ENCODE measurements at regions of chr10 and their contacts with region 1.

Region 1: GRCh38 chr10:99248824-99249223 is 13.2 kb upstream of the HPSE2 start:
- DNase-seq: no peak
- H3K4me3 Mint-ChIP-seq: no peak overlapping the region
- H3K27ac Mint-ChIP-seq: no peak overlapping the region
- H3K4me1 Mint-ChIP-seq: no peaks in the 10 kb centered on the region
- H3K27me3 Mint-ChIP-seq: peaks cover 31% of the 10 kb centered on the region

Region 2: GRCh38 chr10:98467506-98468346 is 781.1 kb before region 1 on chr10:
- CTCF ChIA-PET with region 1: interaction called, 22 read pairs
- intact Hi-C with region 1: loop called (anchors 1 kb)
- DNase-seq: peak; percentile 75
- H3K4me3 Mint-ChIP-seq: peak overlapping the region; percentile 79
- H3K27ac Mint-ChIP-seq: peak overlapping the region; percentile 57
- H3K4me1 Mint-ChIP-seq: peaks cover 6% of the 10 kb centered on the region
- H3K27me3 Mint-ChIP-seq: peaks cover 9% of the 10 kb centered on the region

Region 3: GRCh38 chr10:98488669-98489426 is 760.0 kb before region 1 on chr10:
- CTCF ChIA-PET with region 1: no interaction called
- intact Hi-C with region 1: no loop called
- DNase-seq: no peak
- H3K4me3 Mint-ChIP-seq: no peak overlapping the region
- H3K27ac Mint-ChIP-seq: no peak overlapping the region
- H3K4me1 Mint-ChIP-seq: no peaks in the 10 kb centered on the region
- H3K27me3 Mint-ChIP-seq: peaks cover 18% of the 10 kb centered on the region

Region 4: GRCh38 chr10:98748298-98748697 is 500.5 kb before region 1 on chr10:
- CTCF ChIA-PET with region 1: interaction called, 11 read pairs
- intact Hi-C with region 1: loop called (anchors 1 kb)
- DNase-seq: peak; percentile 10
- H3K4me3 Mint-ChIP-seq: no peak overlapping the region
- H3K27ac Mint-ChIP-seq: no peak overlapping the region
- H3K4me1 Mint-ChIP-seq: no peaks in the 10 kb centered on the region
- H3K27me3 Mint-ChIP-seq: peaks cover 3% of the 10 kb centered on the region

Region 5: GRCh38 chr10:98790802-98791201 is 458.0 kb before region 1 on chr10:
- CTCF ChIA-PET with region 1: no interaction called
- intact Hi-C with region 1: loop called (anchors 5 kb)
- DNase-seq: peak; percentile 6
- H3K4me3 Mint-ChIP-seq: no peak overlapping the region
- H3K27ac Mint-ChIP-seq: no peak overlapping the region
- H3K4me1 Mint-ChIP-seq: no peaks in the 10 kb centered on the region
- H3K27me3 Mint-ChIP-seq: peaks cover 2% of the 10 kb centered on the region

Region 6: GRCh38 chr10:98858525-98858924 is 390.3 kb before region 1 on chr10:
- CTCF ChIA-PET with region 1: interaction called, 4 read pairs
- intact Hi-C with region 1: loop called (anchors 2 kb)
- DNase-seq: no peak
- H3K4me3 Mint-ChIP-seq: no peak overlapping the region
- H3K27ac Mint-ChIP-seq: no peak overlapping the region
- H3K4me1 Mint-ChIP-seq: no peaks in the 10 kb centered on the region
- H3K27me3 Mint-ChIP-seq: no peaks in the 10 kb centered on the region

Region 7: DNA sequence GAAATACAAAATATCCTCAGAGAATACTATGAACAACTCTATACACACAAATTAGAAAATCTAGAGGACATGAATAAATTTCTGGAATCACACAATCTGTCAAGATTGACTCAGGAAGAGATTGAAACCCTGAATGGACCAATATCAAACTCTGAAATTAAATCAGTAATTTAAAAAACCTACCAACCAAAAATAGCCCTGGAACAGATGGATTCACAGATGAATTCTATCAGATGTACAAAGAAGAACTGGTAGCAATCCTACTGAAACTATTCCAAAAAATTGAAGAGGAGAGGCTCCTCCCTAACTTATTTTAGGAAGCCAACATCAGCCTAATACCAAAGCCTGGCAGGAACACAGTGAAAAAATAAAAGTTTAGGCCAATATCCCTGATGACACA is 203.2 kb before region 1 on chr10:
- CTCF ChIA-PET with region 1: no interaction called
- intact Hi-C with region 1: no loop called
- DNase-seq: no peak
- H3K4me3 Mint-ChIP-seq: no peak overlapping the region
- H3K27ac Mint-ChIP-seq: no peak overlapping the region
- H3K4me1 Mint-ChIP-seq: no peaks in the 10 kb centered on the region
- H3K27me3 Mint-ChIP-seq: no peaks in the 10 kb centered on the region